ENCODE measurements at regions of chr16 and their contacts with region 1.

Region 1: DNA sequence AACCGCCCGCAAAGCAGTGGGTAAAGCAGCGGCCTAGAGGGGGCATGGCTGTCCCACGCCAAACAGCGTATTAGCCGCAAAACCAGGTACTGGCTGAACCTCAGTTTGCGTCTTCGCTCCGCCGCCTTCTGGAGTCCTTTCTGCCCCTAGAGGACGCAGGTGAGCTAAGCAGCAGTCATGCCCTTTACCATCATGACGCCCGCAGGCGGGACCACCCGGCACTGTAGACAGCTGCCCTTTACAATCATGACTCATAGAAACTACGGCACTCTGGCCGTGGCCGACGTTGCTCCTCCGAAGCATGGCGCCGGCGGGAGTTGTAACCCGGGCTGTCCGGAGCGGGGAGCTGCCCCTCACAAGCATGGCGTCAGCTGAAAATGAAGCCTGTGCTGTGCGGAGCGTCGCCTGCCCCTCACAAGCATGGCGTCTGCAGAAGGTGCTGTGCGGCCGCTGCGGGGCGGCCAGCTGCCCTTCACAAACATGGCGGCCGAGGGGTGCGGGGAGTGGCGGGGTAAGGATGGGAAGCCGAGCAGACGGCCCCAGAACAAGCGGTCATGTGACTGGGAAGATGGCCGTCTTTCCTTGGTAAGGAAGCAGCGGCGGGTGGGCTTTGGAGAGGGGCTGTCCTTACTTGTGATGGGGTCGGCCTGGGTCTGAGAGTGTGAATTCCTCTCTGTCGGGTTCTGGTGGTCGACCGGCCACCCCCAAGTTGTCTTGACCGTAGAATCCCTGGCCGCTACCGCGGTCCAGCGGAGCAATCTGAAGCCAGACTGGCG is at the start of gene VPS35L:
- DNase-seq: peak; percentile 89 to 99 (median 96)
- ATAC-seq: peak; percentile 96
- H3K4me3 ChIP-seq: peak within 1 kb of the TSS; percentile 88
- H3K4me3 Mint-ChIP-seq: peak within 1 kb of the TSS; percentile 93
- H3K27ac ChIP-seq: peak within 1 kb of the TSS; percentile 75 to 88
- H3K27ac Mint-ChIP-seq: peak within 1 kb of the TSS; percentile 89
- H3K4me1 ChIP-seq: peaks cover 22% of the 10 kb centered on the region
- H3K4me1 Mint-ChIP-seq: peaks cover 28% of the 10 kb centered on the region
- H3K27me3 ChIP-seq: no peaks in the 10 kb centered on the region
- H3K27me3 Mint-ChIP-seq: no peaks in the 10 kb centered on the region
- CTCF ChIP-seq: peak; percentile 76
- total RNA-seq, gene VPS35L: 25.8 to 28.3 TPM

Region 2: DNA sequence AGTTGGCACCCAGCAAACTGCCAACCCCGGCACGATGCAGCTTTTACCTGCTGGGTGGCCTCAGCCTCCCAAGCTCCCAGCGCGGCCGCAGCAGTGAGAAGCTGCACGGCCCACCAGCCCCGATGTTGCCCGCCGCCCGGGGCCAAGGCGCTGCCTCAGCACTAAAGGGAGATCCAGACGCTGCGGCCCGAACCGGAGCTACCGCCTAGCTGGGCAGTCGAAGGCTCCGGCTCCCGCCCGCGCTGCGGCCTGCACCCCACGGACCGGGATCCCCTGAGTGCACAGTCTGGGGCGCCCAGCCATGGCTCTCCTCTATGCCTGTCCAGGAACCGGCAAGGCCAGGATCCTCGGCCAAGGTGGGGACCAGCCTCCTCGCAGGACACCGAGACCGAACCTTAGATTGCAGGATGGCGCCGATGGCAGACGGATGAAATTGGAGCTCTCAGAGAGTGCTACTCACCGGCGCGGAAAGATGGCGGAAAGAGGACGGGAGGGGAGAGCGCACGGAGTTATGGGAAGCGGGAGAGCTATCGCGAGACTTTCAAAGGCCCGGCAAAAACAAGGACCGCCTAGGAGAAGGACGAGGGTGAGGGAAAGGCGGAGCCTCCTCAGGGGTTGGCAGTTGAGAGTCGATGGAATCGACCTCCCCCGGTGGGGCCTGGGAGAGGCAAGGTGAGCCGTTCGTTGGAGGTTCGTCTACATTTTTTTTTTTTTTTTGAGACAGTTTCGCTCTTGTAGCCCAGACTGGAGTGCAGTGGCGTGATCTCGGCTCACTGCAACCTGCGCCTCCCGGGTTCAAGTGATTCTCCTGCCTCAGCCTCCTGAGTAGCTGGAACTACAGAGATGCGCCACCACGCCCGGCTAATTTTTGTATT is 765.3 kb before region 1 on chr16 and contains the start of gene RPS15A:
- CTCF ChIA-PET with region 1: no interaction called
- POLR2A ChIA-PET with region 1: interaction called, 7 read pairs
- intact Hi-C with region 1: loop called in 1 of 2 experiments (anchors 10 kb)
- DNase-seq: peak; percentile 84 to 99 (median 89)
- ATAC-seq: peak; percentile 94
- H3K4me3 ChIP-seq: peak within 1 kb of the TSS; percentile 79
- H3K4me3 Mint-ChIP-seq: peak within 1 kb of the TSS; percentile 92
- H3K27ac ChIP-seq: peak within 1 kb of the TSS; percentile 63 to 66
- H3K27ac Mint-ChIP-seq: peak within 1 kb of the TSS; percentile 83
- H3K4me1 ChIP-seq: peaks cover 47% of the 10 kb centered on the region
- H3K4me1 Mint-ChIP-seq: peaks cover 49% of the 10 kb centered on the region
- H3K27me3 ChIP-seq: no peaks in the 10 kb centered on the region
- H3K27me3 Mint-ChIP-seq: no peaks in the 10 kb centered on the region
- CTCF ChIP-seq: no peak
- total RNA-seq, gene RPS15A: 3,821 to 3,943 TPM

Region 3: DNA sequence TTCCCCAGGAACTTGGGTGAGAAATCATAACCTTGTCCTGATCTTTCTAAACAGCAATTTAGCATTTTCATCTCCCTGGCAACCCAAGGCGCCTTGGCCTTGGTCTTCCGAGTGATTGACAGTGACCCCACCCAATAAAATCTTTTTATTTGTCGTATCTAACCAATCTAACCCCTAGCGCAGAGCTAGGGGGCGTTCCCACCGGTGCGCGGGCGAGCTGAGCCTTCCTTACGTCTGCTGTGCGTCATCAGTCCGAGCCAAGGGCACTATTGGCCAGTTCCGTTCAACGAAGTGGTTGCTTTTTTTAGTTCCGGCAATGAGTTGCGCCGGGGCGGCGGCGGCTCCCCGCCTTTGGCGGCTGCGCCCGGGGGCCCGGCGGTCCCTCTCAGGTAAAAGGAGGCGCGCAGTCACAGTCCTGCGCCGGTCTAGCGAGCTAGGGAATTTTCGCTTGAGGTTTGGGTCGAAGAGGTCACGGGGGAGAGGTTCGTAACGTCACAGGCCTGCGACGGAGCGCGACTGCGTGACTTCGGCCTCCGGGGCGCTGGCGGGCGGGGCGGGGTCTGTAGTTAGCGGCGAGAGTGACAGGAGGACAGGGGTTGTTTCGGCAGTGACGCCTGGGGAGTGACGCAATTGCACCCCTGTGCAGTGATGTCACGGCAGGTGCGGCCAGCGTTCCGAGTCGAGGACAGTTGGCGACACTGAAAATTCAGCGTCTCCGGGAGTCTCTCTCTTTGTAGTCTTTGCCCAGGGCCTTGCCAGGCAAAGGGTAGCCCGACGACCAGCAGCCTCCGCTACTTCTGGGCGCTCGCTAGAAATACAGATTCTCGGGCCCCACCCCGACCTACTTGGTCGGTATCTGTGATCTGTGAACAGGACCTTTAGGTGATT is 487.8 kb before region 1 on chr16 and contains the start of gene COQ7:
- CTCF ChIA-PET with region 1: interaction called, 7 read pairs
- POLR2A ChIA-PET with region 1: interaction called, 16 read pairs
- intact Hi-C with region 1: loop called (anchors 2 to 5 kb)
- DNase-seq: peak; percentile 93 to 100 (median 97)
- ATAC-seq: peak; percentile 86
- H3K4me3 ChIP-seq: peak within 1 kb of the TSS; percentile 84
- H3K4me3 Mint-ChIP-seq: peak within 1 kb of the TSS; percentile 96
- H3K27ac ChIP-seq: peak within 1 kb of the TSS; percentile 99 to 100
- H3K27ac Mint-ChIP-seq: peak within 1 kb of the TSS; percentile 86
- H3K4me1 ChIP-seq: peaks cover 12% of the 10 kb centered on the region
- H3K4me1 Mint-ChIP-seq: peaks cover 15% of the 10 kb centered on the region
- H3K27me3 ChIP-seq: no peaks in the 10 kb centered on the region
- H3K27me3 Mint-ChIP-seq: no peaks in the 10 kb centered on the region
- CTCF ChIP-seq: no peak
- total RNA-seq, gene COQ7: 7.9 to 9.1 TPM

Region 4: DNA sequence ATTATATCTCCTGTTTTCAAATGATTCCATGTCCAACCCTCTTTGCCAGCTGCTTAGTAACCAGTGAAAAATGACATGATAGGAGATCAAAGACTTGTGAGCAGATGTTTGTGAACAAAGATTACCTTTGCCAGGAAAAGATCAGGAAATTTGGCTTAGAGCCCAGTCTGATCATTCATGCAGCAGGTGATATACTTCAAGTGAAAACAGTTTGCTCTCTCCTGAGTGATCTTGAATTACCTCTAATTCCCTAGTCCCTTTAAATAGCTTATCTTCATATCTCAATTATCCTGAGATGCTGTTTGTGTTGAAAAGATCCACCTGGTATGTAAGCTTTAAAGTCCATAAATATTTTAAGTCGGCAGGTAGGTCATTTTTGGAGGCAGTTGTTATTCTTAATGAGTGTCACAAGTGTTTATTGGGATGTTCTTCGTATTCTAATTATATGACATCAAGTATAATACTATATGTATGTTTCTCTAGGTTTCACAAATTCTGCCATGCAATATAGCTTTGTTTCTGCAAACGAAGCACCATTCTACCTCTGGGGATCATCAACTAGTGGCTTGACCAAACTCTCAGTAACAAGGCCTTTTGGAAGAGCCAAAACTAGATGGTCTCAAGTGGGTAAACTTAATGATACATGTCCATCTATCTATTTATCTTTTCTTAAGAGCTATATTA is 13.1 kb before region 1 on chr16:
- CTCF ChIA-PET with region 1: interaction called, 14 read pairs
- POLR2A ChIA-PET with region 1: interaction called, 4 read pairs
- intact Hi-C with region 1: no loop called
- DNase-seq: no peak
- ATAC-seq: no peak
- H3K4me3 ChIP-seq: no peak overlapping the region
- H3K4me3 Mint-ChIP-seq: no peak overlapping the region
- H3K27ac ChIP-seq: no peak overlapping the region
- H3K27ac Mint-ChIP-seq: no peak overlapping the region
- H3K4me1 ChIP-seq: no peaks in the 10 kb centered on the region
- H3K4me1 Mint-ChIP-seq: no peaks in the 10 kb centered on the region
- H3K27me3 ChIP-seq: no peaks in the 10 kb centered on the region
- H3K27me3 Mint-ChIP-seq: no peaks in the 10 kb centered on the region
- CTCF ChIP-seq: no peak

Region 5: DNA sequence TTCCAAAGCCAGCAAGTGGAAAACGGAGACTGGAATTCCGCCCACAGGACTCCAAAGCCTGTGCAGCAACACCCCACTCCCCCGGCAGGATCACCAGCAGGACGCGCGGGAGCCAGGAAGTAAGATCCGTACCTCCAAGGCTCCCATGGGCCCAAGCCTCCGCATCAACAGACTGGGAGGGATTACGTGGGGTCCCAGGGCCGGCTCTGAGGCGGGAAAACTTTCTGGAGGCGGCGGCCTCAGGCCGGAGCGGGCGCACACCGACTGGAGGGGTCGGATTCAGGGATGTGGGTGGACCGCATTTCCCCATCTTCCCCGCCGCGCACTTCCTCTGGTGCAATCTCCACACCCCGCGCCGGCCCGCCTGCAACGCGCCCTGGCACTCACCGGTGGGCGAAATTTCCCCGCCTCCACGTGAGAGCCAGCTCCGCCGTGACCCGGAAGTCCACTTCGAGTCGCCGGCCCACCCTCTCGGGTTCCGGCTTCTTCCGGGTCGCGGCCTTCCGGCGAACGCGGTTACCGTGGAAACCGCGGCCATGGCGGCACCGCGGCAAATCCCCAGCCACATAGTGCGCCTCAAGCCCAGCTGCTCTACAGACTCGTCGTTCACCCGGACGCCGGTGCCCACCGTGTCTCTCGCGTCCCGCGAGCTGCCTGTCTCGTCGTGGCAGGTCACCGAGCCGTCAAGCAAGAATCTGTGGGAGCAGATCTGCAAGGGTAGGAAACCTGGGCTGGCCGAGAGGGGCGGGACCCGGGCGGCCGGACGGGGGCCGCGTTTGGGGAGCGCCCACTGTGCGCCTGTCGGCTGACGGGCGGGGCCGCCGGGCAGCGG is 162.6 kb after region 1 on chr16 and contains the starts of genes IQCK and KNOP1:
- CTCF ChIA-PET with region 1: interaction called, 5 read pairs
- POLR2A ChIA-PET with region 1: interaction called, 10 read pairs
- intact Hi-C with region 1: loop called in 1 of 2 experiments (anchors 2 kb)
- DNase-seq: peak; percentile 74 to 98 (median 84)
- ATAC-seq: peak; percentile 93
- H3K4me3 ChIP-seq: peak within 1 kb of the TSS; percentile 73
- H3K4me3 Mint-ChIP-seq: peak within 1 kb of the TSS; percentile 93
- H3K27ac ChIP-seq: peak within 1 kb of the TSS in 1 of 2 donors; percentile 30
- H3K27ac Mint-ChIP-seq: peak within 1 kb of the TSS; percentile 33
- H3K4me1 ChIP-seq: peaks cover 23% of the 10 kb centered on the region
- H3K4me1 Mint-ChIP-seq: peaks cover 40% of the 10 kb centered on the region
- H3K27me3 ChIP-seq: no peaks in the 10 kb centered on the region
- H3K27me3 Mint-ChIP-seq: no peaks in the 10 kb centered on the region
- CTCF ChIP-seq: no peak
- total RNA-seq, gene IQCK: 1.6 to 1.7 TPM
- total RNA-seq, gene KNOP1: 3.5 to 4.1 TPM

Region 6: DNA sequence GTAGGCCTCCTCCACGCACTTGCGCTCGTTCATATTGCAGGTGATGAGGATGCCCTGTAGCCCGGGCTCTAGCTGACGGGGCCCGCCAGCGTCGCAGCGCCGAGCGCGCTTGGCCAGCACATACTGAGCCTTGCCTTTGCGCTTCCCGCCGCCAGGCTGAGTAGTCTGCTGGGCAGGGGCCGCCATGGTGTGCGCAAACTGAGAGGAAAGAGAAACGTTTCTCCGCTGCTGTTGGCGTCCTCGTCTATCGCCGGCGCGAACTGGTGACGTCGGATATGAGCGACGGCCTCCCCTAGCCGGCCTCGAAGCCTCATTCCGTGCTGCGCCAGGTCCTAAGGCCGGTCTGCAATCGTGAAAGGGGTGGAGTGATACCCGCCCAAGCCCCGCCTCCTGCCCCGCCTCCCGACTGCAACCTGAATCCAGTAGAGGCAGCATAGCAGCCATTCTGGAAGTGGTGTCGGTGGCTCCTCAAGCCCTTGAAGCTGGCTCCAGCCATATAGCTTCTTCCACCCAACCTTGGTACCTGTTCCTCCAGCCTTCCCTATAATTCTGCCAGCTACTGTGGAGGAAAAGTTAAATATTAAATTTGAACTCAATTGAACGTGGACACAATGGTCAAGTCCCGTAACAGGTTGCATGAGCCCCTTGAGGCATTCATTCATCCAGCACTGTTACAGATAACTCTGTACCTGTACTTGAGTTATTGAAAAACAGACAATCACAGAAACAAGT is 1186.4 kb after region 1 on chr16 and contains the start of gene THUMPD1:
- CTCF ChIA-PET with region 1: no interaction called
- POLR2A ChIA-PET with region 1: no interaction called
- intact Hi-C with region 1: loop called in 1 of 2 experiments (anchors 10 kb)
- DNase-seq: peak; percentile 94 to 99 (median 98)
- ATAC-seq: peak; percentile 92
- H3K4me3 ChIP-seq: peak within 1 kb of the TSS; percentile 100
- H3K4me3 Mint-ChIP-seq: peak within 1 kb of the TSS; percentile 97
- H3K27ac ChIP-seq: peak within 1 kb of the TSS; percentile 99 to 100
- H3K27ac Mint-ChIP-seq: peak within 1 kb of the TSS; percentile 99
- H3K4me1 ChIP-seq: peaks cover 35% of the 10 kb centered on the region
- H3K4me1 Mint-ChIP-seq: peaks cover 34% of the 10 kb centered on the region
- H3K27me3 ChIP-seq: no peaks in the 10 kb centered on the region
- H3K27me3 Mint-ChIP-seq: no peaks in the 10 kb centered on the region
- CTCF ChIP-seq: no peak
- total RNA-seq, gene THUMPD1: 105 to 107 TPM